Breast epithelium (tissue), 4 donors: ENCODE measurements at regions of chr12 and their contacts with region 1.

Region 1: DNA sequence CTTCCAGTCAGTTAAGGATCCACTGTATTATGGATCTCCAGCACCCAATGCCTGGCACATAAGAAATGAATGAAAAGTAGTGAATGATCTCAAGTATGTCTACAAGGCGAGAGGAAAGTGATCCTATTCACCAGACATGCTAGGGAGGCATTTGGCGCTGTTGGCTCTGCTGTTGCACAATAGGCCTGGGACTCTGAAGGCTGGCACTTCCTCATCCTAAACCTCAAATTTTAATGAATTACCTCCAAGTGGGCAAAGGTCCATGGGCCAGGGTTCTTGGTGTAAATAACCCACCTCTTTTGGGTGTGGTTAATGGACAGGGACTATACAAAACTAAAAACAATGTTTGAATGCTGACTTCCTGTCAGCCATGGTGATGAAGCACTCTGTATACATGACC is 173.4 kb upstream of the PZP start:
- DNase-seq: no peak
- H3K4me3 ChIP-seq: no peak overlapping the region
- H3K27ac ChIP-seq: no peak overlapping the region
- H3K4me1 ChIP-seq: no peaks in the 10 kb centered on the region
- H3K27me3 ChIP-seq: no peaks in the 10 kb centered on the region
- CTCF ChIP-seq: no peak
- POLR2A ChIP-seq: no peak

Region 2: DNA sequence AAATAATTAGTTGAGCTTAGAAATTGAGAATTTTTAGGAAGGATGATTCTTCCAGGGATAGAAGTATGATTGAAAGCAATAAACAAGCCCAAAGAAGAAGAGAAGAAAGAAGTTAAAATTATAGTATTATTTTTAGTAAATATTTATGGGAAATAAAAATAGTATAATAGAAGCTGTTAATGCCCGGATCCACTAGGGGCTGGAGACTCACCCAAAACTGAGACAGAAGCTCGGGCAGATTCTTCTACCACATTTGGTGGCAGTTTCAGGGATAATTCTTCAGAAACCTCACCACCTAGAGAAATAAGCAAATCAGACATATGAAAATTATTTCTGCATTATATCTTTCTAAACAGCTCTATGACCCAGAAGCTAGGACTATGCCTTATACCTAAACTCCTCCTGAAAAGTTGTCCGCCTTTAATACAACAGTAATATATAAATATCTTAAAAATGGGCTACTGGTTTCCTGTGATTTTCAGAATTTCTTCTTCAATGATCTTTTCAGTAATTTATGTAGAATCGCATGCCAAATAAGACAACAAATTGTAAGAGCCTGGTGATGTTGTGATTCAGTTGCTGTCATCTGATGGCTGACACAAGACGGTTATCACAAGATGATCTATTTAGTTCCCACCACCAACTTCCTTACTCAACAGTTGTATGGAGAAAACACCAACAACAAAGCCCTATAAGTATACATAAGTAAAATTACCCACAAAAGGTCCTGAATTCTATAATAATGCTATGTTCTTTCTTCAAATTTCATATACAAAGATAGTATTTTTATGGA is 301.5 kb before region 1 on chr12:
- intact Hi-C with region 1: loop called (anchors 5 kb)
- DNase-seq: no peak
- H3K4me3 ChIP-seq: no peak overlapping the region
- H3K27ac ChIP-seq: no peak overlapping the region
- H3K4me1 ChIP-seq: no peaks in the 10 kb centered on the region
- H3K27me3 ChIP-seq: no peaks in the 10 kb centered on the region
- CTCF ChIP-seq: no peak
- POLR2A ChIP-seq: no peak

Region 3: DNA sequence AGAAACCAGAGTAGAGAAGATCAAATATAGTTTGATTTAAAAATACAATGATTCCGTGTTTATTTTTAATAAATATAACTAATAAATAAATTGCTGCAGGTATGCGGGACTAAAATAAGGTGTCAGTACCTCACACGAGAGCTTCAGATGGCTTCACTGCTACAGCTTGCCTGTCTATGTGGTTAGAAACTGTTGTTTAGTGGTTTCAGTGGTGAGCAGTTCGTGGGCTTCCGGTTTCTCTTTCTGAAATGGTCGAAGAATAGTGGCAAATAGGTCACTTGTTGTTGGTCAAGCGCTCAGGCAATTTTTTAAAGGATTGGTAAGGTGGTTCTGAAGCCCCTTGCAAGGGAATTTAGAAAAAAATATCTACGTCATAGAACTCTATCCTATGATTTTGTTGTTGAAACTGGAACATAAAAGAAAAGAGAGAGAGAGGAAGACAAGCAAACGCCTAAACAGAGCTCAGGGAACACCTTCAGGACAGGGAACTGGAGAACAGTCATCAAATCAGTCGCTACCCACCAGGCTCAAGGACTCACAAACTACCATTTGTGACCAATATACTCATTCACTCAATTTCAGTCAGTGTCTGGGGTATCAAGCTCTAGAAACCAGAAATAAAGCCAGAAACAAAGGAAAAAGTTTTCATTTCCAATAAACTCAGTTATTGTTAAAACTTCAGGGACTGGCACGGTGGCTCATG is 862.4 kb after region 1 on chr12:
- intact Hi-C with region 1: loop called (anchors 10 kb)
- DNase-seq: no peak
- H3K4me3 ChIP-seq: no peak overlapping the region
- H3K27ac ChIP-seq: no peak overlapping the region
- H3K4me1 ChIP-seq: no peaks in the 10 kb centered on the region
- H3K27me3 ChIP-seq: no peaks in the 10 kb centered on the region
- CTCF ChIP-seq: no peak
- POLR2A ChIP-seq: no peak